Heart right ventricle (tissue), 16 donors: ENCODE measurements at regions of chr2 and their contacts with region 1.

Region 1: DNA sequence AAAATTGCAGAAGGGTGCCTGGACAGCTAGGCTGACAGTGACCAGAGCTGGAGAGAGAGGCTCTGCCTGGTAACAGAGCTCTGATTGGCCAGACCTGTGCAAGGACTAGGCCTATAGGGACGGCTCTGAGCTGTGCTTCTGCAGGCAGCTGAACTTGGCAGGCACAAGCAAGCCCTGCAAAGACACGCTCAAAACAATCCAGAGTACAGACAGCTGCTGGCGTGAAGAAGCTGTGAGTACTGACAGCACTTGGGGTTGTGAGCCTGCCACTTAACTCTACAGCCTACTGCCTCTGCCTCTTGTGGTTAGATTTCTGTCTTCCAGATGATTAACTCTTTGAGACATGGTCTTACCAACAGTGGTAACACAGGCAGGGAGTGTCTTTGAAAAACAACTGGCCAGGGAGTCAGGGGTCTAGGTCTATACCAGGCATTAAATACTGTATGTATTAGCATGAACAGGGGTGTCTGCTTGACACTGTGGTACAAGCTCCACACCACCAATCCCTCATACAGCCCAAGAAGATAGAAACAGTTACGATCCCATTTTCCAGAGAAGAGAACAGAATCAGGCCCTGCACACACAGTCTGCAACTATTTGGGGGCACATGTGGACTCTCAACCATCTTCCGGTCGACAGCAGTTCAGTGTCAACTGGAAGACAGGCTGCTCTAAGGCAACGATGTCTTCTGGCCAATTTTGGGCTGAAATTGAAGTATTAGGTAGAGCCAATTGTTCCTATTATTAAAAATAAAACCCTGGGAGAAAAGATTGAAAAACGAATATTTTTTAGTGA is 568.4 kb downstream of the TNS1 start:
- DNase-seq: peak; percentile 77 to 91
- ATAC-seq: peak; percentile 96 to 98 (median 98)
- H3K4me3 ChIP-seq: peak overlapping the region in 5 of 10 donors; percentile 12 to 31 (median 28)
- H3K27ac ChIP-seq: peak overlapping the region; percentile 8 to 77 (median 60)
- H3K4me1 ChIP-seq: peaks cover 0 to 80% (median 43%) of the 10 kb centered on the region in 9 donors
- H3K27me3 ChIP-seq: no peaks in the 10 kb centered on the region
- CTCF ChIP-seq: peak in 1 of 9 donors; percentile 19

Region 2: GRCh38 chr2:217331523-217332139 is 102.7 kb before region 1 on chr2:
- intact Hi-C with region 1: loop called in 1 of 10 experiments (anchors 10 kb)
- DNase-seq: peak in 1 of 2 donors; percentile 21
- ATAC-seq: peak; percentile 70 to 93 (median 84)
- H3K4me3 ChIP-seq: no peak overlapping the region
- H3K27ac ChIP-seq: peak overlapping the region; percentile 16 to 83 (median 66)
- H3K4me1 ChIP-seq: peaks cover 4 to 34% (median 6%) of the 10 kb centered on the region in 9 donors
- H3K27me3 ChIP-seq: peaks cover 0 to 9% (median 0%) of the 10 kb centered on the region in 7 donors
- CTCF ChIP-seq: no peak

Region 3: GRCh38 chr2:217393585-217394032 is 40.8 kb before region 1 on chr2:
- intact Hi-C with region 1: loop called in 1 of 10 experiments (anchors 5 kb)
- DNase-seq: peak; percentile 50 to 79
- ATAC-seq: peak; percentile 84 to 97 (median 94)
- H3K4me3 ChIP-seq: no peak overlapping the region
- H3K27ac ChIP-seq: peak overlapping the region in 6 of 10 donors; percentile 53 to 79 (median 72)
- H3K4me1 ChIP-seq: peaks cover 3 to 41% (median 20%) of the 10 kb centered on the region in 9 donors
- H3K27me3 ChIP-seq: no peaks in the 10 kb centered on the region
- CTCF ChIP-seq: no peak

Region 4: GRCh38 chr2:217568289-217568971 is 134.1 kb after region 1 on chr2:
- intact Hi-C with region 1: no loop called
- DNase-seq: no peak
- ATAC-seq: peak in 4 of 8 donors; percentile 21 to 37 (median 32)
- H3K4me3 ChIP-seq: no peak overlapping the region
- H3K27ac ChIP-seq: no peak overlapping the region
- H3K4me1 ChIP-seq: no peaks in the 10 kb centered on the region
- H3K27me3 ChIP-seq: no peaks in the 10 kb centered on the region
- CTCF ChIP-seq: no peak